Sigmoid colon (tissue), 7 donors: ENCODE measurements at regions of chr9 and their contacts with region 1.

Region 1: GRCh38 chr9:95048225-95049087 is 269.1 kb downstream of the FANCC start:
- DNase-seq: no peak
- H3K4me3 ChIP-seq: peak overlapping the region; percentile 36 to 60 (median 59)
- H3K27ac ChIP-seq: peak overlapping the region; percentile 86 to 99 (median 88)
- H3K4me1 ChIP-seq: peaks cover 0 to 91% (median 73%) of the 10 kb centered on the region in 4 donors
- H3K27me3 ChIP-seq: no peaks in the 10 kb centered on the region
- CTCF ChIP-seq: no peak
- EP300 ChIP-seq: no peak
- POLR2A ChIP-seq: no peak

Region 2: GRCh38 chr9:95080961-95081647 is 32.6 kb after region 1 on chr9:
- intact Hi-C with region 1: loop called (anchors 5 kb)
- DNase-seq: peak; percentile 64
- H3K4me3 ChIP-seq: no peak overlapping the region
- H3K27ac ChIP-seq: peak overlapping the region; percentile 77 to 99 (median 86)
- H3K4me1 ChIP-seq: peaks cover 0 to 100% (median 95%) of the 10 kb centered on the region in 4 donors
- H3K27me3 ChIP-seq: no peaks in the 10 kb centered on the region
- CTCF ChIP-seq: no peak
- EP300 ChIP-seq: no peak
- POLR2A ChIP-seq: no peak